ENCODE measurements at regions of chr21 and their contacts with region 1.

Region 1: GRCh38 chr21:41167348-41168342 is at the start of gene BACE2:
- DNase-seq: peak in 7 of 9 donors; percentile 2 to 61 (median 6)
- ATAC-seq: peak; percentile 81
- H3K4me3 ChIP-seq: no peak within 1 kb of the TSS
- H3K4me3 Mint-ChIP-seq: peak within 1 kb of the TSS; percentile 63 to 88 (median 75)
- H3K27ac ChIP-seq: no peak within 1 kb of the TSS
- H3K27ac Mint-ChIP-seq: no peak within 1 kb of the TSS
- H3K4me1 ChIP-seq: no peaks in the 10 kb centered on the region
- H3K4me1 Mint-ChIP-seq: peaks cover 3 to 23% (median 16%) of the 10 kb centered on the region in 7 donors
- H3K27me3 ChIP-seq: no peaks in the 10 kb centered on the region
- H3K27me3 Mint-ChIP-seq: peaks cover 52 to 61% (median 56%) of the 10 kb centered on the region in 5 donors
- total RNA-seq, gene BACE2: 0.03 to 3.6 (median 1.3) TPM in 4 of 5 experiments, not detected in the other

Region 2: DNA sequence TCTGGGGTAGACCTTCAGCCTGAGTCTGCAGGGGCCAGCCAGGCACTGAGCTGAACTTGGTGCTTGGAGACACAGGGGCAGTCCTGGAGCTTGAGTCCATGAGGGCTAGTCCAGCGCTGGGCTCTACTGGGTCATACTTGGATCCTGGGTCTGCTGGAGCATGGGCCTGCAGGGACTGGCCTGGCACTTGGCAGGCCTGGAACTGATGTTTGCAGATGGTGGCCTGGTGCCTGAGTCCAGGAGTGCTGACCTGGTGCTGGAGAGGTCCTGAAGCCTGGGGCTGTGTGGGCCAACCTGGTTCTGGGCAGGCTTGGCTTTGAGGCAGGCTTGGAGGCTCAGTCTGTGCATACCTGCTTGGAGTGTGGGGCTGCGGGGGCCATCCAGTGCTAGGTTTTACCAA is 177.3 kb before region 1 on chr21:
- CTCF ChIA-PET with region 1: no interaction called
- POLR2A ChIA-PET with region 1: no interaction called
- intact Hi-C with region 1: no loop called
- DNase-seq: no peak
- ATAC-seq: peak; percentile 12
- H3K4me3 ChIP-seq: no peak overlapping the region
- H3K4me3 Mint-ChIP-seq: no peak overlapping the region
- H3K27ac ChIP-seq: no peak overlapping the region
- H3K27ac Mint-ChIP-seq: no peak overlapping the region
- H3K4me1 ChIP-seq: no peaks in the 10 kb centered on the region
- H3K4me1 Mint-ChIP-seq: no peaks in the 10 kb centered on the region
- H3K27me3 ChIP-seq: no peaks in the 10 kb centered on the region
- H3K27me3 Mint-ChIP-seq: peaks cover 0 to 10% (median 2%) of the 10 kb centered on the region in 5 donors

Region 3: DNA sequence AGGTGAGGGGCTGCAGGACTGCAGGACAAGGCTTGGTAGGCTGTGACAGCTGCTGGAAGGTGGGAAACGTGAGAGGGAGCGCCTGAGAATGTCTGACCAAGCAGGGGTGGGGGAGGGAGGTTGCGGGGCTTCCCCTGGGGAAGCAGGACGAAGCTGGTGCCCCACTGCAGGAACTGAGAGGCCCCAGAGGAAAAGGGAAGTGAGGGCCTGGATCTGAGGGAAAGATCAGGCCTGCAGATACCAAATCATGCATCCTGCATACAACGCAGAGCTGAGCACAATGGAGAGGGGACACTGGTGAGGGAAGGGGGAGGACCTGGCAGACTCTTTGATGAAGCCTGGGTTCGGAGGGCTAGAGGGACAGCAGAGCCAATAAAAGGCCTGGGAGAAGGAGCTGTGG is 65.4 kb before region 1 on chr21:
- CTCF ChIA-PET with region 1: no interaction called
- POLR2A ChIA-PET with region 1: no interaction called
- intact Hi-C with region 1: no loop called
- DNase-seq: no peak
- ATAC-seq: no peak
- H3K4me3 ChIP-seq: no peak overlapping the region
- H3K4me3 Mint-ChIP-seq: no peak overlapping the region
- H3K27ac ChIP-seq: no peak overlapping the region
- H3K27ac Mint-ChIP-seq: peak overlapping the region in 1 of 9 donors; percentile 6
- H3K4me1 ChIP-seq: no peaks in the 10 kb centered on the region
- H3K4me1 Mint-ChIP-seq: no peaks in the 10 kb centered on the region
- H3K27me3 ChIP-seq: peaks cover 0 to 4% of the 10 kb centered on the region in 2 donors
- H3K27me3 Mint-ChIP-seq: peaks cover 0 to 37% (median 24%) of the 10 kb centered on the region in 5 donors

Region 4: GRCh38 chr21:41112740-41113692 is 54.6 kb before region 1 on chr21:
- CTCF ChIA-PET with region 1: no interaction called
- POLR2A ChIA-PET with region 1: no interaction called
- intact Hi-C with region 1: loop called in 1 of 2 experiments (anchors 2 kb)
- DNase-seq: peak in 6 of 9 donors; percentile 13 to 41 (median 28)
- ATAC-seq: peak; percentile 45
- H3K4me3 ChIP-seq: peak overlapping the region; percentile 44
- H3K4me3 Mint-ChIP-seq: peak overlapping the region; percentile 77 to 93 (median 88)
- H3K27ac ChIP-seq: peak overlapping the region; percentile 60
- H3K27ac Mint-ChIP-seq: peak overlapping the region; percentile 31 to 96 (median 89)
- H3K4me1 ChIP-seq: peaks cover 5 to 13% of the 10 kb centered on the region in 2 donors
- H3K4me1 Mint-ChIP-seq: peaks cover 17 to 38% (median 30%) of the 10 kb centered on the region in 7 donors
- H3K27me3 ChIP-seq: no peaks in the 10 kb centered on the region
- H3K27me3 Mint-ChIP-seq: peaks cover 0 to 10% (median 4%) of the 10 kb centered on the region in 5 donors

Region 5: GRCh38 chr21:41207401-41208068 is 39.9 kb after region 1 on chr21:
- CTCF ChIA-PET with region 1: no interaction called
- POLR2A ChIA-PET with region 1: no interaction called
- intact Hi-C with region 1: loop called in 1 of 2 experiments (anchors 2 kb)
- DNase-seq: no peak
- ATAC-seq: no peak
- H3K4me3 ChIP-seq: no peak overlapping the region
- H3K4me3 Mint-ChIP-seq: no peak overlapping the region
- H3K27ac ChIP-seq: no peak overlapping the region
- H3K27ac Mint-ChIP-seq: peak overlapping the region in 1 of 9 donors; percentile 29
- H3K4me1 ChIP-seq: no peaks in the 10 kb centered on the region
- H3K4me1 Mint-ChIP-seq: peaks cover 0 to 9% (median 0%) of the 10 kb centered on the region in 7 donors
- H3K27me3 ChIP-seq: no peaks in the 10 kb centered on the region
- H3K27me3 Mint-ChIP-seq: peaks cover 0 to 19% (median 9%) of the 10 kb centered on the region in 5 donors